Aorta (tissue), 5 donors: ENCODE measurements at regions of chr6 and their contacts with region 1.

Region 1: DNA sequence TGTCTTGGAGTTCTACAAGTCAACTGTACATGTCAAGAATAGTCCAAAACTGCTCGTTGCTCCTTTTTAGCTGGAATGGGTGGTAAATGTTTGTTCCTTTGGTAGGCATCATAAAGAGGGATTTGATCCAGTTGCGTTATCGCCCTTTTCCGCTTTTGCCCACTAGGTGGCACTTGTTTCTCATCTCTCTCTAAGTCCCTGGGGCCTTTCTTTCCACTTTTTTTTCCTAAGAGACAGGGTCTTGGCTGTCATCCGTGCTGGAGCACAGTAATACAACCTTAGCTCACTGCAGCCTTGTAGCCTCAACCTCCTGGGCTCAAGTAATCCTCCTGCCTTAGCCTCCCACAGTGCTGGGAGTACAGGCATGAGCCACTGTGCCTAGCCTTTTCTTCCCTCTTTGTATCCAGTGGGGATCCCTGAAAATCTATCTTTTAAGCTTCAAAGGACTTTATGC is 20.7 kb downstream of the GTPBP2 start:
- DNase-seq: peak in 1 of 2 donors; percentile 68
- ATAC-seq: peak; percentile 62
- H3K4me3 ChIP-seq: no peak overlapping the region
- H3K27ac ChIP-seq: no peak overlapping the region
- H3K4me1 ChIP-seq: no peaks in the 10 kb centered on the region
- H3K27me3 ChIP-seq: no peaks in the 10 kb centered on the region

Region 2: GRCh38 chr6:44084231-44085014 is 476.1 kb after region 1 on chr6:
- intact Hi-C with region 1: loop called in 1 of 2 experiments (anchors 5 kb)
- DNase-seq: peak in 1 of 2 donors; percentile 31
- ATAC-seq: no peak
- H3K4me3 ChIP-seq: no peak overlapping the region
- H3K27ac ChIP-seq: no peak overlapping the region
- H3K4me1 ChIP-seq: no peaks in the 10 kb centered on the region
- H3K27me3 ChIP-seq: no peaks in the 10 kb centered on the region